ENCODE measurements at regions of chr10 and their contacts with region 1.

Region 1: GRCh38 chr10:48470115-48470892 is 134.6 kb downstream of the ARHGAP22 start:
- DNase-seq: peak in 1 of 2 experiments; percentile 71
- H3K4me3 ChIP-seq: no peak overlapping the region
- H3K4me3 Mint-ChIP-seq: no peak overlapping the region
- H3K27ac Mint-ChIP-seq: no peak overlapping the region
- H3K4me1 ChIP-seq: peaks cover 38% of the 10 kb centered on the region
- H3K4me1 Mint-ChIP-seq: peaks cover 21% of the 10 kb centered on the region
- H3K27me3 ChIP-seq: no peaks in the 10 kb centered on the region
- H3K27me3 Mint-ChIP-seq: no peaks in the 10 kb centered on the region
- CTCF ChIP-seq: no peak

Region 2: DNA sequence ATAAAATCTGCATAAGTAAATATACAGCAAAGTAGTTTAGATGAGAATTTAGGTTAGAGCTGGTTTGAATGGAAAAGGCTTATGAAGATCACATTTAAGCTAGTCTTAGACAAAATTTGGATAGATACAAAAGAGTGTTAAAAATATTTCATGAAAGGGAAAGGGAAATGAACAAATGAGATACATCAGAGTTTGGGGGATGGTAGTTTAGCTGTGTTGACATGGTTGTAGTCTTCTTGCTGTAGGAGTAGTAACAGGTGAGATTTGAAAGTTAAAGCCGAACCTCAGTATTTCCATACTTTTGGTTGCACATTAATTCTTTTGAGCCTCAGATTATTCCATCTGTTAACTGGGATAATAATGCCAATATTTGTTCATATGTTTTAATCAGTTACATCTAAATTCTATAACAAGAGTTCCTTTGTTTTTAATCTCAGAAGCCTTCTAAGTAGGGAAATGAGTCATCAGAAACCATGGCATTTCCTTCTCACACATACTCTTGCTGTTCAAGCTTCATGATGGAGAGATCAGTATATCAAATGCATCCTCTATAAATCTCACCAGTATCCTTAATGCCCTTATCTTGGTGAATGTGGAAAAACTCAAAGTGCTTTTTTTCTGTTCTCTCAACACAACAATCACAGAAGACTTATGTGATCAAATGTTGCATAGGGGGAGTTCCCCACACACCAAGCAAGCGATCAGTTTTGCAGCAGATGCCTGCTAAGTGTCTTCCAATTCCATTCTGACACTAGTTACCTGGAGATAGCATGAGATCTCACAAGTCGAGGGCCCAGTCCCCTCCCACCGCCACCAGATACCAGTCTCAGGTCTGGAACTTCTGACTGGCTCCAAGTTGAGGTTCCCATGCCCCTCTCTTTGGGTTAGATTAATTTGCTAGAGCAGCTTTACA is 79.1 kb before region 1 on chr10:
- CTCF ChIA-PET with region 1: no interaction called
- POLR2A ChIA-PET with region 1: no interaction called
- intact Hi-C with region 1: no loop called
- DNase-seq: no peak
- H3K4me3 ChIP-seq: no peak overlapping the region
- H3K4me3 Mint-ChIP-seq: no peak overlapping the region
- H3K27ac Mint-ChIP-seq: no peak overlapping the region
- H3K4me1 ChIP-seq: peaks cover 30% of the 10 kb centered on the region
- H3K4me1 Mint-ChIP-seq: peaks cover 24% of the 10 kb centered on the region
- H3K27me3 ChIP-seq: no peaks in the 10 kb centered on the region
- H3K27me3 Mint-ChIP-seq: no peaks in the 10 kb centered on the region
- CTCF ChIP-seq: no peak

Region 3: DNA sequence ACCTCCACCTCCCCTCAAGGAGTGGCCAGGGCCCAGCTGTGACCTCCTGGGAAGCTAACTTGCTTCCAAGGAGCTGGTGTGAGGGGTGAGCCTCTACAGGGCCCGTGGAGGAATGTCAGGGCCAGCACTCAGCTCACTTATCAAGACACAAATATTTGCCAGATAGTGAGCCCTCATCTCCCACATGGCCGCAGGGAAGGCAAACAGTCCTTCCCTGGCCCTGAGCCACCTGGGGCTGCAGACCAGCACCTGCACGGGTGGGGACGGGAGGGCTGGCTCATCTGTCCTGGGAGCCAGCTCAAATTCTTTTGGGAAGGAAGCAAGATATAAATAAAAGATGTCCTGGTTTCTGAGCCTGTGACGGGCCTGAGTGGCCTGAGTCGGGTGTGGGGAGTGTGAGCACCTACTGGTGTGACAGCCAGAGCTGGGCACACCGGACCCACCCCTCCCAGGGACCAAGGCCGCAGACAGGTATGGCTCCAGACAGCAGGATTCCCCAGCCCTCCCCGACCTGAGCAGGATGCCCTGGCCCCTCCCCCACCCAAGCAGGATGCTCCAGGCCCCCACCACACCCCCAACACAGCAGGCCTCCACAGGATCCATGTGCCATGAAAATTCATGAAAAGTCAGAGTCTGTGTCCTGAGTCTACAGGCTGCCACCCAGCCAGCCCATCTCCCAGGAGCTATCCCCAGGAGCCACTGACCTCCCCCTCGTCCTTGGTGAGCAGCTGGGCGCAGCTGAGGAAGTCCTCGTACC is 15.8 kb before region 1 on chr10:
- CTCF ChIA-PET with region 1: interaction called, 3 read pairs
- POLR2A ChIA-PET with region 1: interaction called, 3 read pairs
- intact Hi-C with region 1: loop called (anchors 2 kb)
- DNase-seq: peak; percentile 83 to 92
- H3K4me3 ChIP-seq: no peak overlapping the region
- H3K4me3 Mint-ChIP-seq: peak overlapping the region; percentile 42
- H3K27ac Mint-ChIP-seq: peak overlapping the region; percentile 92
- H3K4me1 ChIP-seq: peaks cover 47% of the 10 kb centered on the region
- H3K4me1 Mint-ChIP-seq: peaks cover 19% of the 10 kb centered on the region
- H3K27me3 ChIP-seq: no peaks in the 10 kb centered on the region
- H3K27me3 Mint-ChIP-seq: no peaks in the 10 kb centered on the region
- CTCF ChIP-seq: no peak

Region 4: DNA sequence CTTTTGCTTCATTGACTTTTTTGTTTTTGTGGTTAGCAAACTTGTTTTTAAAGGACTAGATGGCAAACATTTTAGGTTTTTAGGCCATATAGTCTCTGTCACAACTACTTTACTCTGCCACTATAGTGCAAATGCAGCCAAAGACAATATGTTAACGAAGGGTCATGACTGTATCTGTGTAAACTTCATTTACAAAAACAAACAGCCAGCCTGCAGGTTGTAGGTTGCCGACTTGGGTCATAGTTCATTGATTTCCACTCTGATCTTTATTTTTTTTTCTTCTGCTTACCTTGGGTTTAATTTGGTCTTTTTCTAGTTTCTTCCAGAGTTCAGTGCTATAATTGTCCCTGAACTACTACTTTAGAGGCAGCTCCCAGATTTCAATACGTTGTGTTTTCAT is 14.6 kb after region 1 on chr10:
- CTCF ChIA-PET with region 1: no interaction called
- POLR2A ChIA-PET with region 1: no interaction called
- intact Hi-C with region 1: loop called (anchors 2 kb)
- DNase-seq: no peak
- H3K4me3 ChIP-seq: no peak overlapping the region
- H3K4me3 Mint-ChIP-seq: no peak overlapping the region
- H3K27ac Mint-ChIP-seq: no peak overlapping the region
- H3K4me1 ChIP-seq: peaks cover 10% of the 10 kb centered on the region
- H3K4me1 Mint-ChIP-seq: peaks cover 12% of the 10 kb centered on the region
- H3K27me3 ChIP-seq: no peaks in the 10 kb centered on the region
- H3K27me3 Mint-ChIP-seq: no peaks in the 10 kb centered on the region
- CTCF ChIP-seq: no peak

Region 5: GRCh38 chr10:48506147-48506917 is 36.0 kb after region 1 on chr10:
- CTCF ChIA-PET with region 1: no interaction called
- POLR2A ChIA-PET with region 1: no interaction called
- intact Hi-C with region 1: no loop called
- DNase-seq: peak; percentile 69 to 74
- H3K4me3 ChIP-seq: no peak overlapping the region
- H3K4me3 Mint-ChIP-seq: no peak overlapping the region
- H3K27ac Mint-ChIP-seq: no peak overlapping the region
- H3K4me1 ChIP-seq: no peaks in the 10 kb centered on the region
- H3K4me1 Mint-ChIP-seq: no peaks in the 10 kb centered on the region
- H3K27me3 ChIP-seq: no peaks in the 10 kb centered on the region
- H3K27me3 Mint-ChIP-seq: no peaks in the 10 kb centered on the region
- CTCF ChIP-seq: peak; percentile 56 to 68

Region 6: GRCh38 chr10:48517911-48518811 is 47.9 kb after region 1 on chr10:
- CTCF ChIA-PET with region 1: no interaction called
- POLR2A ChIA-PET with region 1: no interaction called
- intact Hi-C with region 1: no loop called
- DNase-seq: peak in 1 of 2 experiments; percentile 35
- H3K4me3 ChIP-seq: no peak overlapping the region
- H3K4me3 Mint-ChIP-seq: no peak overlapping the region
- H3K27ac Mint-ChIP-seq: peak overlapping the region; percentile 62
- H3K4me1 ChIP-seq: peaks cover 8% of the 10 kb centered on the region; the same call in 1 of the 2 replicates
- H3K4me1 Mint-ChIP-seq: peaks cover 16% of the 10 kb centered on the region
- H3K27me3 ChIP-seq: no peaks in the 10 kb centered on the region
- H3K27me3 Mint-ChIP-seq: no peaks in the 10 kb centered on the region
- CTCF ChIP-seq: no peak